Posterior vena cava (tissue), 2 donors: ENCODE measurements at regions of chr4 and their contacts with region 1.

Region 1: DNA sequence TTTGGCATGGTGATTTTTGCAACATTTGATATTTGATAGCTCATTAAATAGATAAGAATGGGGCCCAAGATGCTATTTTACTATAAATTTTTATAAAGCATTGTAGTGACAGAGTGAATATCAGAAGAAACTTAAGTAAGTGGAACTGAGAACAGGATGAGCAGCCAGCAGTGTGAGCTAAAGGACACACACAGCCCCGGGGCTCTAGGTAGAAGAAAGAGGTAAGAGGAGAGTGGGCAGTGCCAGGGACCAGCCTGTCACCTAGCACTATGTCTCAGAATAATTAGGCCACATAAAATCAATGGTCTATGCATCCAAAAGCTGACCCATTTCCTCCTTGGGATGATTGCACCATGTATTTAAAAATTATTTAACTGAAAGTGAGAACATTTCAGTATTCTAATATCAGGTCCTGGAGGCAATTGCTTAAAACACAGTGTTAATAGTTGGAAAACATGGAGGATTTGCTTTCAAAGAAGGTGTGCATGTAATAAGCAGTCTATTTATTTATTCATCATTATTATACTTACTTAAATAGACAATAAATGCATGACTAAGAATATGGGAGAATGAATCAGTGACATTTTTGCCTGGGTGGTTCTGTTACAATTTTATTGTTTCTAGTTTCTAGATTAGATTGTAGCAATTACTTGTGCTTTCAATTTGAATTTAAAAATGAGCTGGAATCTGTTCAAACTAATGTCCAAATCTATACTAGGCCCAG is 145.4 kb downstream of the AREG start:
- DNase-seq: no peak

Region 2: GRCh38 chr4:74549936-74550335 is 40.4 kb before region 1 on chr4:
- intact Hi-C with region 1: loop called in 1 of 2 experiments (anchors 2 kb)
- DNase-seq: no peak